Calu3 (cell line): ENCODE measurements at regions of chr6 and their contacts with region 1.

Region 1: DNA sequence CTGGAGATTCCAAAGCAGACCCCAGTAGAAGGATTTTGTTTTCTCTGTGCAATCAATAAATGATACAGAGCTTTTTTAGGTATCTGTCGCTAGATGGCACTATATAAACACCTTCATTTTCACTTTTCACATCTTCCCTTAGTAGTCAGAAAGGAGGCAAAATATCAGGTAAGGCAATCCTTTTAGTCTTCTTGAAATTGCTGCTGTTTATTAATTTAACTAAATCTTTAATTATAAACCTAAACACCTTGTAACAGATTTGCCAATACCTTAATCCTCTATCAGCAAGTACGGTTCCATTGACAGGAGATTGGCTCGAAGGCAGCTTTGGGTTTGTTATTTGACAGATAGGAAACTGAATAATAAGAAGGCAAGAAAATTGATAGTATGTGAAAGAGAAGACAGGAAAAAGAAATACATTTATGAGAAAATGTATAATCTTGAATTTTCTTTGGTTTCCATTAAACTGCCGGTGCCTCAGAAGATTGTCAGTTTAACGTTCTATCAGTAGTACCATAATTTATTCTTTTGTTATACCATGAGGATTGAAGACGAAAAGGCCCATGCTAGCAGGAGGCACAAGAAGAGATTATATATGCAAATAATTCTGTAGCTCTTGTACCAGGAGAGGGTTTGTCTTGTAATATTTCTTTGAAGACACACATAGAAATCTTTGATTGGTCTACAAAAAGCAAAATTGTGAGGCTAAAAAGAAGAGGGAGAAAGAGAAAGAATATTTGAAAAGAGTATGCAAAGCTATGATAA is 23.5 kb upstream of the IBTK start:
- DNase-seq: no peak
- H3K4me3 Mint-ChIP-seq: no peak overlapping the region
- H3K27ac Mint-ChIP-seq: no peak overlapping the region
- H3K4me1 Mint-ChIP-seq: no peaks in the 10 kb centered on the region
- H3K27me3 Mint-ChIP-seq: no peaks in the 10 kb centered on the region
- CTCF ChIP-seq: no peak

Region 2: GRCh38 chr6:82381278-82381677 is 110.2 kb after region 1 on chr6:
- CTCF ChIA-PET with region 1: no interaction called
- intact Hi-C with region 1: no loop called
- DNase-seq: no peak
- H3K4me3 Mint-ChIP-seq: no peak overlapping the region
- H3K27ac Mint-ChIP-seq: no peak overlapping the region
- H3K4me1 Mint-ChIP-seq: peaks cover 10% of the 10 kb centered on the region
- H3K27me3 Mint-ChIP-seq: no peaks in the 10 kb centered on the region
- CTCF ChIP-seq: no peak

Region 3: GRCh38 chr6:82541306-82541705 is 270.2 kb after region 1 on chr6:
- CTCF ChIA-PET with region 1: no interaction called
- intact Hi-C with region 1: loop called (anchors 5 kb)
- DNase-seq: no peak
- H3K4me3 Mint-ChIP-seq: no peak overlapping the region
- H3K27ac Mint-ChIP-seq: no peak overlapping the region
- H3K4me1 Mint-ChIP-seq: no peaks in the 10 kb centered on the region
- H3K27me3 Mint-ChIP-seq: peaks cover 12% of the 10 kb centered on the region
- CTCF ChIP-seq: no peak